Sigmoid colon (tissue), 7 donors: ENCODE measurements at regions of chr3 and their contacts with region 1.

Region 1: GRCh38 chr3:138834359-138835212 is at the start of gene PIK3CB:
- DNase-seq: peak; percentile 92
- H3K4me3 ChIP-seq: peak within 1 kb of the TSS; percentile 94 to 100 (median 96)
- H3K27ac ChIP-seq: peak within 1 kb of the TSS; percentile 92 to 94 (median 94)
- H3K4me1 ChIP-seq: peaks cover 0 to 20% (median 17%) of the 10 kb centered on the region in 4 donors
- H3K27me3 ChIP-seq: no peaks in the 10 kb centered on the region
- CTCF ChIP-seq: peak in 2 of 4 experiments; percentile 35 to 41
- EP300 ChIP-seq: no peak
- POLR2A ChIP-seq: peak in 1 of 2 donors; percentile 62
- total RNA-seq, gene PIK3CB: 17.4 to 29.5 (median 22.2) TPM

Region 2: GRCh38 chr3:138186803-138187295 is 647.7 kb before region 1 on chr3:
- intact Hi-C with region 1: loop called (anchors 10 kb)
- DNase-seq: peak; percentile 96
- H3K4me3 ChIP-seq: peak overlapping the region; percentile 73 to 94 (median 87)
- H3K27ac ChIP-seq: peak overlapping the region; percentile 95 to 99 (median 97)
- H3K4me1 ChIP-seq: peaks cover 0 to 30% (median 26%) of the 10 kb centered on the region in 4 donors
- H3K27me3 ChIP-seq: no peaks in the 10 kb centered on the region
- CTCF ChIP-seq: no peak
- EP300 ChIP-seq: no peak
- POLR2A ChIP-seq: no peak

Region 3: DNA sequence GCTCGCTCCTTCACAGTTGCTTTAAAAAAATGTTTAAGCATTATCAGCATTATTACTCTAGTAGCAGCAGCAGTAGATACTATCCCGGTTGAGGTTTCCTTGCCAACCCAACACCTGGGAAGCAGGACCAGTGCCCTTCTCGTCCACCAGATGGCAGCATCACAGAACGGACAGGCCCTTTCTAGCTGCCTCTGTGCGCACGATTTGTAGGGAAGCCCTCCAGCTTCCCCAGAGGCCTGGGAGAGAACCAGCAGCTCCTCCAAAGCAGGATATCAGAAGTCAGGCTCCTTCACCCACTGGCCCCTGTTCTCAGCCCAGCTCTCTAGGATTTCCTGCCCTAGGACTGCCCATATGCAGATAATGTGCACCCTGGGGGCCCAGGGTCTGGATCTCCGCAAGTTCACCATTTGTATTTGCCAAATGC is 417.0 kb before region 1 on chr3:
- intact Hi-C with region 1: loop called (anchors 10 kb)
- DNase-seq: peak; percentile 90
- H3K4me3 ChIP-seq: no peak overlapping the region
- H3K27ac ChIP-seq: no peak overlapping the region
- H3K4me1 ChIP-seq: peaks cover 0 to 7% (median 4%) of the 10 kb centered on the region in 4 donors
- H3K27me3 ChIP-seq: no peaks in the 10 kb centered on the region
- CTCF ChIP-seq: peak; percentile 81 to 94 (median 86)
- EP300 ChIP-seq: no peak
- POLR2A ChIP-seq: no peak

Region 4: GRCh38 chr3:138594150-138594934 is 240.2 kb before region 1 on chr3 and contains the start of gene CEP70:
- intact Hi-C with region 1: loop called (anchors 5 kb)
- DNase-seq: peak; percentile 98
- H3K4me3 ChIP-seq: peak within 1 kb of the TSS; percentile 55 to 78 (median 74)
- H3K27ac ChIP-seq: peak within 1 kb of the TSS; percentile 94
- H3K4me1 ChIP-seq: peaks cover 0 to 14% (median 10%) of the 10 kb centered on the region in 4 donors
- H3K27me3 ChIP-seq: no peaks in the 10 kb centered on the region
- CTCF ChIP-seq: peak; percentile 85 to 97 (median 90)
- EP300 ChIP-seq: peak in 1 of 4 donors; percentile 14
- POLR2A ChIP-seq: peak; percentile 90 to 92
- total RNA-seq, gene CEP70: 42.6 to 77.2 (median 66.8) TPM

Region 5: GRCh38 chr3:138608322-138609135 is 226.1 kb before region 1 on chr3 and contains the start of gene FAIM:
- intact Hi-C with region 1: loop called (anchors 2 kb)
- DNase-seq: peak; percentile 85
- H3K4me3 ChIP-seq: peak within 1 kb of the TSS; percentile 47 to 91 (median 74)
- H3K27ac ChIP-seq: peak within 1 kb of the TSS; percentile 93 to 99 (median 96)
- H3K4me1 ChIP-seq: peaks cover 0 to 14% (median 12%) of the 10 kb centered on the region in 4 donors
- H3K27me3 ChIP-seq: no peaks in the 10 kb centered on the region
- CTCF ChIP-seq: no peak
- EP300 ChIP-seq: no peak
- POLR2A ChIP-seq: no peak
- total RNA-seq, gene FAIM: 6.6 to 15.3 (median 10.1) TPM

Region 6: DNA sequence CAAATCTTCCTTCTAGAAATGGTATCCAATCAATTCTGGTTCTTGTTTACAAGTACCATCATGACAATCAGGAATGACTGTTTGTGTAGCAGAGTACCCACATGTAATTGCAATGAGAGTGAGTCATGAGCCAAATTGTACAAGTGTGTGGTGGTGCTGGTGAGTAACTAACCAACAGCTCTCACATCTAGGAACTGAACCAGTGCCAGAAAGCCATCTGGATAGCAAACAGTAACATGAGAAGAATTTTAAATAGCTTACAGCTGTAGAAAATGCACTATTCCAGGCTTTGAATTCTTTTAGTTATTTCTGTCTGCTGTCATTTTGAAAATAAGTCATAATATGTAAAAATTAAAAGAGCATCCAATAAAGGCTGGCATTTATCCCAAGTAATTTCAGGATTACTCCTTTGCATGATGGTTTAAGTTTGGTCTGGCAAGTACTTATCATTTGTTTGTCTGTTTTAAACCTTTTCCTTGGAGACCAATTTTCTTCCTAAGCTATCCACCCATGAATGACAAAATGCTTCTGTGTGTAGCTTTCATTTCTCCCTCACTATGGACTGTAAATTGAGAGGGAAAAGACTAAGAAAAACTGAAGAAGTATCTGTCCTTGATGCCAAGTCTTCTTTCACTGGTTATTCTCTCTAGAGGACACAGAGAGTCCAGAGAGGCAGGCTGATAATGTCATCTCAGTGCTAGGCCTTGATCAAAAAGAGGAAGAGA is 59.9 kb before region 1 on chr3:
- intact Hi-C with region 1: loop called (anchors 5 kb)
- DNase-seq: peak; percentile 72
- H3K4me3 ChIP-seq: no peak overlapping the region
- H3K27ac ChIP-seq: peak overlapping the region; percentile 1 to 65 (median 60)
- H3K4me1 ChIP-seq: peaks cover 0 to 29% (median 18%) of the 10 kb centered on the region in 4 donors
- H3K27me3 ChIP-seq: no peaks in the 10 kb centered on the region
- CTCF ChIP-seq: no peak
- EP300 ChIP-seq: no peak
- POLR2A ChIP-seq: no peak

Region 7: DNA sequence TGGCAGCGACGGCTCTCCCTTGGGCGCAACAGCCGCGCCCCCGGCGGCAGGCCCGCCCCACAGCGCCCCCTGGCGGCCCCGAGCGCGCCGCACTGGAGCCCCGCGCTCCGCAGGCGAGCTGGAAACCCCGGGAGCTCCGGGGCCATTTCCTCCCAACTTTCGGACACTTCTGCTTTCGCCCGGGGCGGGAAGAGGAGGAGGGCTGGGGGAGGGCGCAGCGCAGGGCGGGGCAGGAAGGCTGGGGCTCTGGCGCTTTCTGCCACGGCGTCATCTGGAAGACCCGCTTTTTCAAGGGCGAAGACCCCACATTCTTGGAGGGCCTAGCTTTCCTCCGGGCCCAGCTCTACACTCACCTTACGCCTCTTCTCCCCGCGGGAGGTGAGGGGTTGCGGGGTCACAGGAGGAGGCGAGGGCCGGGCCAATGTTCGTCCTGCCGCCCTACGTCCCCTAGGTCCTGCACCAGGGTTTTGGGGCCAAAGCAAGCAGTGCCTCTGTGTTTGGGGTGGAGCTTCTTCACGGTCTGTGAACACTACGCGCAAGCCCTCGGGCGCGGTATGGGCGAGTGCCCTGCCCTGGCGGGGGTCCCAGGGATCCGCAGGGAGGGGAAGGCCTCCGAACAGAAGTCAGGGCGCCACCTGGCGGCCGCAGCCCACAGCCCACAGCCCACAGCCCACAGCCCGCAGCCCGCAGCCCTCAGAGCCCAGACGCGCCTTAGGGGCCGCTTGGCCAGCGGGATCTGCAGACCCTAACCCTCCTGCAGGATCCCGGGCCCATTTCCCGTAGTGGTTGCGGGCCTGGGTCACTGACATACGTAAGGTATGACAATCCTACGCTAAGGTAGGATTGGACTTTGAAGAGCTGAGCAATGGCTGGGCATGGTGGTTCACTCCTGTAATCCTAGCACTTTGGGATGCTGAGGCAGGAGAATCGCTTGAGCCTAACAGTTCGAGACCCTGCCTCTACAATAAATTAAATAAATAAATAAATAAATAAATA is 81.2 kb after region 1 on chr3:
- intact Hi-C with region 1: loop called (anchors 2 kb)
- DNase-seq: peak; percentile 96
- H3K4me3 ChIP-seq: peak overlapping the region; percentile 63 to 82 (median 67)
- H3K27ac ChIP-seq: peak overlapping the region; percentile 89 to 96 (median 92)
- H3K4me1 ChIP-seq: peaks cover 0 to 15% (median 11%) of the 10 kb centered on the region in 4 donors
- H3K27me3 ChIP-seq: no peaks in the 10 kb centered on the region
- CTCF ChIP-seq: peak; percentile 84 to 92 (median 88)
- EP300 ChIP-seq: no peak
- POLR2A ChIP-seq: no peak